ENCODE measurements at regions of chr1 and their contacts with region 1.

Region 1: GRCh38 chr1:151693076-151693651 is 23.4 kb downstream of the CELF3 start:
- DNase-seq: no peak
- H3K4me3 ChIP-seq: no peak overlapping the region
- H3K27me3 ChIP-seq: no peaks in the 10 kb centered on the region
- CTCF ChIP-seq: peak; percentile 74

Region 2: GRCh38 chr1:151604291-151604690 is 88.9 kb before region 1 on chr1:
- CTCF ChIA-PET with region 1: no interaction called
- POLR2A ChIA-PET with region 1: no interaction called
- DNase-seq: no peak
- H3K4me3 ChIP-seq: no peak overlapping the region
- H3K27me3 ChIP-seq: no peaks in the 10 kb centered on the region
- CTCF ChIP-seq: no peak

Region 3: DNA sequence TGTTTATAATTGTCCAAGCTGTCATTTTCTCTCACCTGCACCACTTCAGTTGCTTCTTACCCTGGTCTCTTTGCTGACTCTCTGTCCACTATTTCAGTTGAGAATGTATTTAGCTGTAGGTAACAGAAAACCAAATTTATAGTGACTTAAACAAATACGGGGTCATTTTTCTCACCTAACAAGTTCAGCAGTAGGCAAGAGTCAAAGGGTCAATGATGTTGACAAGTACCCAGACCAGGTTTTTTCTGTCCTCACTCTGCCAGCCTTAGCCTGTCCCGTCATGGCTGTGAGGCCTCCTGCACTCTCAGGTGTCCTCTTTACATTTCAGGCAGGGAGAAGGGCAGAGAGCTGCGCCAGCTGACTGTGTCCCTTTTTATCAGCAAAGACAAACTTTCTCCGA is 40.0 kb after region 1 on chr1:
- CTCF ChIA-PET with region 1: interaction called, 17 read pairs
- POLR2A ChIA-PET with region 1: no interaction called
- DNase-seq: no peak
- H3K4me3 ChIP-seq: no peak overlapping the region
- H3K27me3 ChIP-seq: peaks cover 8% of the 10 kb centered on the region
- CTCF ChIP-seq: no peak

Region 4: GRCh38 chr1:152162806-152163463 is 469.8 kb after region 1 on chr1:
- CTCF ChIA-PET with region 1: no interaction called
- POLR2A ChIA-PET with region 1: interaction called, 11 read pairs
- DNase-seq: peak; percentile 91
- H3K4me3 ChIP-seq: no peak overlapping the region
- H3K27me3 ChIP-seq: no peaks in the 10 kb centered on the region
- CTCF ChIP-seq: no peak

Measured in BJ (cell line).